A673 (cell line): ENCODE measurements at regions of chr4 and their contacts with region 1.

Region 1: GRCh38 chr4:147334478-147334877 is 146.4 kb upstream of the EDNRA start:
- DNase-seq: peak; percentile 96
- H3K4me3 ChIP-seq: no peak overlapping the region
- H3K27ac ChIP-seq: peak overlapping the region; percentile 81
- H3K4me1 ChIP-seq: peaks cover 38% of the 10 kb centered on the region
- H3K27me3 ChIP-seq: no peaks in the 10 kb centered on the region
- CTCF ChIP-seq: no peak

Region 2: DNA sequence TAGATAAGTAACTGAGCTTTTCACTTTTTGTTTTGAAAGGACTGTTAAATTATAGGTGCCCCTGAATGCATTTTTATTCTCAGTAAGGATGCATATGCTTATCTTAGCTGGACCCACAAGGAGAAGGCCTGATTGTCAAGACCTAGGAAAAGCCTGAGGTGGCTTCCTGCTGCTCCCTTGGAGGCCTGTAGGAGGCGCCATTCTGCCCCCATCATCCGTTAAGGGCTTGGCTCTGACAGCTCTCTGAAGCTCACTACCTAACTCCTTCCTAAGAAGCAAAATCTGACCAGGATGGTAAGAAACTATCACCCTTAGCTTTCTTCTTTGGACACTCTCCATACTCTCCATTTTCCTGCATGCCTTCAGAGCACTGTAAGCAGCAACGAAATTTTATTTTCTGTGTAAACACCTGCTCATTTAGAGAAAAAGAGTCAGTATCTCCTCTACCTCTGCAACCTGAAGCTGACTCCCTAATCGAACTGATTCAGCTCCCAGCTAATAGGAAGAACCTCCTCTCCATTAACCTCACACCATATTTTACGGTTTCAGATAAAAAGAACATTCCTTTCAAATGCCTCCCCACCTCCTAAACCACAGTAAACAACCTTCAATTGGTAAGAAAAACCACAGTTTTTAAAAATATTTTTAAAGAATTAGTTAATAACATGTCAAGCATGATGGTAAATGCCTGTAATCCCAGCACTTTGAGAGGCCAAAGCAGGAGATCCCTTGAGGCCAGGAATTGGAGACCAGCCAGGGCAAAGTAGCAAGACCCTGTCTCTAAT is 73.0 kb after region 1 on chr4:
- CTCF ChIA-PET with region 1: no interaction called
- POLR2A ChIA-PET with region 1: no interaction called
- intact Hi-C with region 1: loop called (anchors 5 kb)
- DNase-seq: no peak
- H3K4me3 ChIP-seq: no peak overlapping the region
- H3K27ac ChIP-seq: no peak overlapping the region
- H3K4me1 ChIP-seq: no peaks in the 10 kb centered on the region
- H3K27me3 ChIP-seq: no peaks in the 10 kb centered on the region
- CTCF ChIP-seq: peak; percentile 57

Region 3: DNA sequence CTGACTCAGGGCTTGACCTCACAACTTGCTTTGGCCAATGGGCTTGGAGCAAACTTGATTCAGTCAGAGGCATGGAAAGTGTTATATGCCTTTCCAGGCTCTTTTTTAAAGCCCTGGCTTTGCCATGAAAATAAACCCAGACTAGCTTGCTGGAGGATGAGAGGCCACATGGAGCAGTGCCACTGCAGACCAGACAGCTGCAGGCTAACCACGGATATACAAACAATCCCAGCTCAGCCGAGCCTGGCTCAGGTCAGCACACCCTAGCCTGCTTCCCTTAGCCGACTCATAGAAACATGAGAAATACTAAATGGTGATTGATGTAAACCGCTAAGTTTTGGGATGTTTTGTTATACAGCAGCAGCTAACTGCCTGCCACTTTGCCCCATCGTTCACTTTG is 742.5 kb after region 1 on chr4:
- CTCF ChIA-PET with region 1: no interaction called
- POLR2A ChIA-PET with region 1: no interaction called
- intact Hi-C with region 1: no loop called
- DNase-seq: no peak
- H3K4me3 ChIP-seq: no peak overlapping the region
- H3K27ac ChIP-seq: no peak overlapping the region
- H3K4me1 ChIP-seq: no peaks in the 10 kb centered on the region
- H3K27me3 ChIP-seq: no peaks in the 10 kb centered on the region
- CTCF ChIP-seq: no peak